ENCODE measurements at regions of chr11 and their contacts with region 1.

Region 1: DNA sequence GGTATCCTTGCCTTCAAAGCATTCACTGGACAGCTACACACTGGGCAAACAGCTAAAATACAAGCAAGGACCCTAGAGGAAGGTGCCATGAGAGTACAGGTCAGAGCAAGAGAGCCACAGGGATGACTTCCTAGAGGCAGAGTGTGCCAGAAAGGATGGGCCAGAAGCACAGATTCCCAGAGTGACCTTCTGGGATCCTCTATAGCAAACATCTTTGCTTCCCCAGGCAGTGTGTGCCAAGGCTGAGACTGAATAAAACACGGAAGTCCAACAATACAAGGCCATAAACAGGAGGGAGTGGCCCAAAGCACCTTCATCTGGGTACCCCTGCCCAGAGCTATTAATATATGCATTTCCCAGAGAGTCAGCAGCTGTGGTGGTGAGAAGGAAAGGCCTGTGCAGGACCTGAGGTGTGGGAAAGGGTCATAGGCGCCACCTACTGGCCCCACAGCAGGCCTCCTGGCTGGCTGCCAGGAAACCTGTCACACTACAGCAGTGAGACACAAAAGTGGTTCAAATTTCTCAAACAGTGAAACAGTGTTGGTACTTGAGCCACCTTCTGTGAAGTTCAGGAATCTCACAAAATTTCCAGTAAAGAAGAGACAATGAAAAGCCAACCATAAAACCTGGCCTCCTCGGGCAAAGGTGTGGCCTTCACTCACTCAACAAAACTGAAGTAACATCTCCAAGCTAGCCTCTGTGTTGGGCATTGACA is 20.3 kb downstream of the CLPB start:
- DNase-seq: peak; percentile 82
- H3K4me3 Mint-ChIP-seq: no peak overlapping the region
- H3K27ac Mint-ChIP-seq: no peak overlapping the region
- H3K4me1 Mint-ChIP-seq: peaks cover 29% of the 10 kb centered on the region
- H3K27me3 Mint-ChIP-seq: no peaks in the 10 kb centered on the region

Region 2: GRCh38 chr11:72292106-72292785 is 121.8 kb before region 1 on chr11:
- CTCF ChIA-PET with region 1: interaction called, 28 read pairs
- DNase-seq: no peak
- H3K4me3 Mint-ChIP-seq: no peak overlapping the region
- H3K27ac Mint-ChIP-seq: no peak overlapping the region
- H3K4me1 Mint-ChIP-seq: no peaks in the 10 kb centered on the region
- H3K27me3 Mint-ChIP-seq: no peaks in the 10 kb centered on the region

Region 3: DNA sequence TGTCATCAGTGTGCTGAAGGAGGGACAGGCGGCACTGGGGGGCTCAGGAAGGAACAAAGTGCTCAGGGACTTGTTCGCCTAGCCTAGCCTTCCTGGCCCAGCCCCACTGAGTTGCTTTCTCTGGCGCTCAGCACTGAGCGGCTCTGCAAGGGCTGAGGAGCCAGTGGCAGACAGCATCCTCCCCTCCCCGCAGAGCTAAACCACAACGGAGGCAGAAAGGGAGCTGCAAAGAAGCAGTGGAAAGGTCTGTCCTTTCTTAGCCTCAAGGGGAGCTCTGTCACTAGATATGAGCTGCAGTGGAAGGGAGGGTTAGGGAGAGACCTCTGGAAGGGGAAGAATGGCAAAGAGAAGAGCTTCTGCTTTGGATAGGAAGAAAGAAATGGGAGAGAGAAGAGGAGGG is 80.4 kb before region 1 on chr11:
- CTCF ChIA-PET with region 1: interaction called, 17 read pairs
- DNase-seq: peak; percentile 84
- H3K4me3 Mint-ChIP-seq: no peak overlapping the region
- H3K27ac Mint-ChIP-seq: peak overlapping the region; percentile 3
- H3K4me1 Mint-ChIP-seq: peaks cover 31% of the 10 kb centered on the region
- H3K27me3 Mint-ChIP-seq: no peaks in the 10 kb centered on the region

Measured in activated naive CD4-positive, alpha-beta T cell treated with anti-CD3 and anti-CD28 coated beads, Interleukin-2, amount 10 ng/mL, durations not matched to agents 7 days and 5 days (primary cell).